ENCODE measurements at regions of chr19 and their contacts with region 1.

Region 1: DNA sequence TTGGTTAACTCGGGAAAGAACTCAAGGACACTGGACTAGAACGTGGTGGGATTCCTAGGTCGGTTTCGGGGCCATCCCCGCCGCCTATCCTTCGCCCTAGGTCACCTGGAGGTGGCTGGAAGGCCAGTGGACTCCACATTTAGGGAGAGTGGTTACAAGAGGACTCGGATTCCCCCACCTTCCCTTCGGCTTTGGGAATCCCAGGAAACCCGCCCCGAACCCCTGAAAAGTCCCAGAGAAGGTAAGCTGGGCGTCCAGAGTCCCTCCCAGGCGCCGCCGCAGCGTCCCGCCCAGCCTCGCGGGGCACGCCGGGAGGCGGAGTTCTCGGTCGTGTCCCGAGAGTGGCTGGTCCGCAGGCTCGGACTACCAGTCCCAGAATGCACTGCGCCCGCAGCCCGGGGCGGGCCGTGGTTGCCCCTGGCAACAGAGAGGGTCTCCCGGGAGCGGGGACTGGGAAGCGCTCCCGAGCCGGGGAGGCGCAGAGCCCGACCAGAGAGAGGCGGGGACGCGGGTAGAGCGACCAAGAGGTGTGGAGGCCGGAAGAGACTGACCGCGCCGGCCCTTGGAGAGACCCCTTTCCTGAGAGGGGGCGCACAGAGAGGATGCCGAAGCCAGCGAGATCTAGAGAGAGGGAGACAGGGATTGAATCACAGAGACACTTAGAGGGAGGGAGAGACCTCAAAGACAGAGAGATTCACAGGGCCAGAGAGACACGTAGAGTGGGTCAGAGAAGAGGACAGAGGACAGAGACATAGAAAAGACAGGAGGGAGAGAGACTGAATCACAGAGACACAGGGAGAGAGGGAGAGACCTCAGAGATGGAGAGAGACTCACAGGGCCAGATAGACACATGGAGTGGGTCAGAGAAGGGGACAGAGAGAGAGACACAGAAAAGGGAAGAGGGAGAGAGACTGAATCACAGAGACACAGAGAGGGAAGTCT is 2.6 kb upstream of the PRKCG start:
- DNase-seq: peak; percentile 74
- ATAC-seq: peak; percentile 92
- H3K4me3 Mint-ChIP-seq: no peak overlapping the region
- H3K27ac Mint-ChIP-seq: no peak overlapping the region
- H3K4me1 Mint-ChIP-seq: peaks cover 41% of the 10 kb centered on the region
- H3K27me3 Mint-ChIP-seq: peaks cover 18% of the 10 kb centered on the region
- CTCF ChIP-seq: no peak

Region 2: DNA sequence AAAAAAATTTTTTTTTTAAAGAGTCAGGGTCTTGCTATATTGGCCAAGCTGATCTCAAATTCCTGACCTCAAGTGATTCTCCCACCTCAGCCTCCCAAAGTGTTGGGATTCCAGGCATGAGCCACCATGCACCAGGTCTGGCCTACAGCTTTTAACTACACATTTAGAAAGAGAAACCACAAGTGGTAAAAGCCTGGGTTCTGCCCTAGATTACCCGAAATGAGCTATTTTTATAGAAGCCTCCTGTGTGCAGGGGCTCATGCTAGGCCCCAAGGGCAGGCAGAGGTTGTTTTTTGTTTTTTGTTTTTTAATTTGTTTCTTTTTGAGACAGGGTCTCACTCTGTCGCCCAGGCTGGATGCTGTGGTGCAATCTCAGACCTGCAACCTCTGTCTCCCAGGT is 25.7 kb before region 1 on chr19:
- CTCF ChIA-PET with region 1: no interaction called
- POLR2A ChIA-PET with region 1: interaction called, 10 read pairs
- intact Hi-C with region 1: no loop called
- DNase-seq: no peak
- ATAC-seq: no peak
- H3K4me3 Mint-ChIP-seq: no peak overlapping the region
- H3K27ac Mint-ChIP-seq: no peak overlapping the region
- H3K4me1 Mint-ChIP-seq: peaks cover 13% of the 10 kb centered on the region
- H3K27me3 Mint-ChIP-seq: peaks cover 23% of the 10 kb centered on the region
- CTCF ChIP-seq: no peak

Region 3: GRCh38 chr19:53912653-53913052 is 33.2 kb after region 1 on chr19:
- CTCF ChIA-PET with region 1: no interaction called
- POLR2A ChIA-PET with region 1: no interaction called
- intact Hi-C with region 1: no loop called
- DNase-seq: no peak
- ATAC-seq: no peak
- H3K4me3 Mint-ChIP-seq: no peak overlapping the region
- H3K27ac Mint-ChIP-seq: no peak overlapping the region
- H3K4me1 Mint-ChIP-seq: peaks cover 15% of the 10 kb centered on the region
- H3K27me3 Mint-ChIP-seq: peaks cover 44% of the 10 kb centered on the region
- CTCF ChIP-seq: no peak

Measured in activated B cell treated with CpG ODN at 0.5 μM for 24 hours (primary cell).